ENCODE measurements at regions of chr17 and their contacts with region 1.

Region 1: GRCh38 chr17:21166595-21167210 is 39.9 kb downstream of the DHRS7B start:
- DNase-seq: no peak
- ATAC-seq: peak; percentile 12 to 67

Region 2: GRCh38 chr17:21214015-21214776 is 47.5 kb after region 1 on chr17 and contains the start of gene TMEM11:
- intact Hi-C with region 1: loop called in 1 of 2 experiments (anchors 5 kb)
- DNase-seq: peak; percentile 98
- ATAC-seq: peak; percentile 97
- total RNA-seq, gene TMEM11: 26.7 to 27.3 TPM

Region 3: GRCh38 chr17:21318439-21318838 is 151.7 kb after region 1 on chr17:
- intact Hi-C with region 1: no loop called
- DNase-seq: no peak
- ATAC-seq: no peak